Heart right ventricle (tissue), 16 donors: ENCODE measurements at regions of chr4 and their contacts with region 1.

Region 1: DNA sequence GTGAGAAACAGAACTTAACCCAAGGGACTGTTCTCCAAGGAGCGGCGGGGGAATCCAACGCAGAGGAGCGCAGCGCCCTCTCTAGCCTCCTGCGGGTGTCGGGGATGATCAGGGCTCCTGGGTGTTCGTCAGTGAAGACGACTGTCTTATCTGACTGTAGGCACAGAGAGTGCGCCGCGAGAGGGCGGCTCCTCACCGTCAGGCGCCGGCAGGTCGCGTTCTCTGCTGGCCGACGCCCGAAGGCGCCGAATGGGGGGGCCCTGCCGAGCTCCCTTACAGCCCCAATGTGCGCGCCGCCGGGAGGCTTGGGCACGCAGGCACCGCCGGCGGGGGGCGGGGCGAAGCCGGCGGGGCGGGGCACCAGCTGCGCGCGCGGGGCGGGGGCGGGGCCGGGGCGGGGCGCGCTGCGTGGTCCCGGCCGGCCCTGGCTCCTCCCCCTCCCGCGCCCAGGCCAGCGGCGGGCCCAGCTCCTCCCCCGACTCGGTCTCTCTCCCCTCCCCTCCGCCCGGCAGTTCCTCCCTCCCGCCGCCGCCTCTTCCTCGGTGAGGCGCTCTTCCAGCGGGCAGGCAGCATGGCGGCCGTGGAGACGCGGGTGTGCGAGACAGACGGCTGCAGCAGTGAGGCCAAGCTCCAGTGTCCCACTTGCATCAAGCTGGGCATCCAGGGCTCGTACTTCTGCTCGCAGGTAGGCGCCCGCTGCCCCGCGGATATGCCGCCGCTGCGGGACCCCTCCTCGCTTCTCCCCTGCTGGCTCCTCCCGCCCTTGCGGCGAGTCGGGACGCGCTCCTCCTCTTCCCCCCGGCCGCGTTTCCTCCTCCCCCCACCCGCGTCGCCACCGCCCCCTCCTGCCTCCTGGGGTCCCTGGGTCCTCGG is at the start of gene METAP1:
- DNase-seq: peak; percentile 90 to 94
- ATAC-seq: peak; percentile 94 to 98 (median 96)
- H3K4me3 ChIP-seq: peak within 1 kb of the TSS; percentile 73 to 99 (median 96)
- H3K27ac ChIP-seq: peak within 1 kb of the TSS; percentile 86 to 95 (median 93)
- H3K4me1 ChIP-seq: peaks cover 0 to 28% (median 13%) of the 10 kb centered on the region in 9 donors
- H3K27me3 ChIP-seq: no peaks in the 10 kb centered on the region
- CTCF ChIP-seq: peak; percentile 5 to 80 (median 49)
- total RNA-seq, gene METAP1: 54.2 to 79.7 (median 60.9) TPM

Region 2: DNA sequence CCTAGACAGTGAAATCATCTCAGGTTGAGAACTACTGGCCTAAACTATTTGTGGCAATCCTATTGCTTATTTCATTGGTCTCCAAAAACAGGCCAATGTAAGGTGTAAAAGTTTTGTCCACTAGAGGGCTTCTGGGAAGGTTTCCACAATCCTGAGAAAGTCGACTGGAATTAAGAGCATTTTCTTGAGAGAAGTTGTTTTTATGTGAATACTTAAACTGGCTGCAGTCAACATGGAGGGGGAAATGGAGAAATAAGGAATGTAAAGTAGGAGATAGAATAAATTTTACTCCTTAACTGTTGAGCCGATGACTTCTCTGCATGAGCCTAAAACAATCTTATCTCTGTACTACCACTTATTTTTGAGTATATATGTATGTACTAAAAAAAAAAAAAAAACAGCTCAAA is 55.5 kb before region 1 on chr4:
- intact Hi-C with region 1: loop called in 5 of 10 experiments (anchors 5 to 10 kb)
- DNase-seq: no peak
- ATAC-seq: peak in 5 of 8 donors; percentile 42 to 62 (median 53)
- H3K4me3 ChIP-seq: no peak overlapping the region
- H3K27ac ChIP-seq: no peak overlapping the region
- H3K4me1 ChIP-seq: no peaks in the 10 kb centered on the region
- H3K27me3 ChIP-seq: no peaks in the 10 kb centered on the region
- CTCF ChIP-seq: peak; percentile 37 to 81 (median 73)

Region 3: DNA sequence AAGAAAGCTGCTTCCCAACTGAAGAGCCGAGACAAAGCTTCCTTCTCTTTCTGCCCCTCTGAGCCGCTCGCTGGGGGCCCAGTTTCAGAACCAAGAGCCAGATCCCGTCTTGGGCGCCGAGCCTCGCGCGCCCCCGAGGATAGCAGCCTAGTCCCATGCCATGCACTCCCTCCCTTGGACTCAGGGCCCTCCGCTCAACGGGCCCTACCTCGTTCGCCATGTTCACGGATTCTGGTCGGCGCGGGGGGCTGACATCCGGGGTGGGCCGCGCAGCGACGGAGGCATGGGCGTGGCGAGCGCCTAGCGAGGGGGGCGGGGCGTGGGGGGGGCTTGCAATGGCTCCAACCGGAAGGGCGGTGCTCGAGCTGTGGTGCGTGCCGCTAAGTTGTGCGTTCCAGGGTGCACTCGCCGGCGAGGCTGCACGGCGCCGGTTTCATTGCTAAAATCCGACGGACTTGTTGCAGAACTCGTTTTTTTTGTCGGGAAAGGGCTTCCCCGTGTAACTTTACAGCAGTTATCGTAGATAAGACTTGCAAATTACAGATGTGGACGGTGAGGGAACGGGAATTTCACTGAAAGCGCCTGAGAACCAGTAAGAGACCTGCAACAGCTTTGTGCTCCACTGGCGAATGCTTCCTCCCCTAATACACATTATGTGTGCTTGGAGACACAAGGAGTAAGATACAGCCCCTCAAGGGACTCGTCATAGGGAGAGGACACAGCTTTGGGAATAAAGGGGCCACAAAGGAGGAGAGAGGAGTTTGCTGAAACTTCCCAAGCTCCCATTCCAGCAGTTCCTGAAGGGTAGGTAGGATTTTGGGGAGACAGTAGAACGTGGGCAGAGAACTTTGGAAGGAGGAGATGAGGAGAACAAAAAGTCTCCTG is 93.3 kb after region 1 on chr4 and contains the start of gene ADH5:
- intact Hi-C with region 1: loop called in 2 of 10 experiments (anchors 2 to 10 kb)
- DNase-seq: peak; percentile 90 to 91
- ATAC-seq: peak; percentile 97 to 100 (median 99)
- H3K4me3 ChIP-seq: peak within 1 kb of the TSS; percentile 63 to 86 (median 76)
- H3K27ac ChIP-seq: peak within 1 kb of the TSS; percentile 90 to 97 (median 94)
- H3K4me1 ChIP-seq: peaks cover 0 to 61% (median 54%) of the 10 kb centered on the region in 9 donors
- H3K27me3 ChIP-seq: no peaks in the 10 kb centered on the region
- CTCF ChIP-seq: no peak
- total RNA-seq, gene ADH5: 150 to 254 (median 204) TPM